ENCODE measurements at regions of chr5 and their contacts with region 1.

Region 1: DNA sequence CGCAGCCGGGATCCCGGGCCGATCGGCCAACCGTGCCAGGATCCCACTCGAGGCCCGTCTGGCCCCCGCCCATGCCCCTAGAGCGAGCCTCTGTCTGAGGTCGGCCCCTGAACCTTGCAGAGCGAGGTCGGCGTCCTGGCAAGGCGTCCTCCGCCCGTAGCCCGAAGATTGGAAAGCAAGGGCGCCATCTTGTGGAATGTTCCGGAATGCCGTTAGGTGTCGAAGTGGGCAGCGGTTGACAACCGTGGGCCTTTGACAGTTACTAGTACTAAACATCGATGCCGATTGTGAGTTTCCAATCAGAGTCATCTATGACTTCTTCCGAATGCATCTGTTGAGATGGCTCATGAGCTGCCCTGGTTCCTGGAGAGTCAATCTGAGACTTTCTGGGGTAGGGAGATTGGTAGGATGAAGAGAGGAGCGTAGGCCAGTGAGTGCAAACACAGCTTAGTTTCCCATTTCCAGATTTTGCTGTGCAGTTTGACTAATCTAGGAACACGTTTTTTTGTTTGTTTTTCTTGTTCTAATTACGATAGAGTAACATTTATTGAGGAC is 923 bp upstream of the PLK2 start:
- DNase-seq: peak; percentile 88 to 95
- ATAC-seq: peak; percentile 84 to 86 (median 85)
- H3K4me3 ChIP-seq: peak overlapping the region; percentile 86
- H3K27ac ChIP-seq: peak overlapping the region; percentile 95
- H3K4me1 ChIP-seq: peaks cover 3% of the 10 kb centered on the region
- H3K27me3 ChIP-seq: no peaks in the 10 kb centered on the region
- CTCF ChIP-seq: peak; percentile 82

Region 2: GRCh38 chr5:57298295-57298984 is 1162.4 kb before region 1 on chr5:
- intact Hi-C with region 1: loop called (anchors 2 kb)
- DNase-seq: peak; percentile 61 to 79
- ATAC-seq: peak; percentile 86 to 97 (median 92)
- H3K4me3 ChIP-seq: no peak overlapping the region
- H3K27ac ChIP-seq: no peak overlapping the region
- H3K4me1 ChIP-seq: no peaks in the 10 kb centered on the region
- H3K27me3 ChIP-seq: no peaks in the 10 kb centered on the region
- CTCF ChIP-seq: peak; percentile 87

Region 3: DNA sequence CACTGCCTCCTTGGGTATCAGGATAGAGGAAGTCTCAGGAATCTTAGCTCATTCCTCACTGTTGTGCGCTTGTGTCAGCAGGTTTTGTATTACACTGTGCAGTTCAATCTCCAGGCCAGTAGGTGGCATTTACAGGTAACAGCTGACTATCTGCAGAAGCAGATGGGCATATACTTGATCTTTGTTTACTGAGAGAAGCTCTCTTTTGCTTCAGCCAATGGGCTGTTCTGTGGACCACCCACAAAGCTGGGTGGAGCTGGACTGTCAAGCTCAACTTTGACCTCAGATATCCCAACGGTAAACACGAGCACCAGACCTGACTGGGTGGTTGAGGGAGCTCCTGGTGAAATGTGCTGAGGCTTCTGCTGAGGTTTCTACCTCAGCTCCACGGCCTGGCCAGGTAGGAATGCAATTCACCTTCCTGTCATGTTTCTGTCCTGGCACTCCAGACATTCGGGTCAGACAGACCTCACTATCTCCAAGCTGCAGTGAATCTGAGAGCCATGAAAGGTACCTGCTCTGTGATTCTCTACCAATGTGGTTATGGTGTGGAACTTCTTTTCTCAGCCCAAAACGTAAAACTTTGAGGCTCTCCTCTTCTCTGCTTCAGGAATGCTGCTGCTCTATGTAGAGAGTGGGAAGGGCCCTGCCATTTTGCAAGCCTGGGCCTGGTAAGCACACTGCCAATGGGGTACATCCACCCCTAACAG is 810.3 kb before region 1 on chr5:
- intact Hi-C with region 1: loop called in 1 of 2 experiments (anchors 5 kb)
- DNase-seq: peak in 1 of 2 donors; percentile 25
- ATAC-seq: peak; percentile 67 to 75 (median 71)
- H3K4me3 ChIP-seq: no peak overlapping the region
- H3K27ac ChIP-seq: no peak overlapping the region
- H3K4me1 ChIP-seq: peaks cover 11% of the 10 kb centered on the region
- H3K27me3 ChIP-seq: no peaks in the 10 kb centered on the region
- CTCF ChIP-seq: peak; percentile 62

Region 4: DNA sequence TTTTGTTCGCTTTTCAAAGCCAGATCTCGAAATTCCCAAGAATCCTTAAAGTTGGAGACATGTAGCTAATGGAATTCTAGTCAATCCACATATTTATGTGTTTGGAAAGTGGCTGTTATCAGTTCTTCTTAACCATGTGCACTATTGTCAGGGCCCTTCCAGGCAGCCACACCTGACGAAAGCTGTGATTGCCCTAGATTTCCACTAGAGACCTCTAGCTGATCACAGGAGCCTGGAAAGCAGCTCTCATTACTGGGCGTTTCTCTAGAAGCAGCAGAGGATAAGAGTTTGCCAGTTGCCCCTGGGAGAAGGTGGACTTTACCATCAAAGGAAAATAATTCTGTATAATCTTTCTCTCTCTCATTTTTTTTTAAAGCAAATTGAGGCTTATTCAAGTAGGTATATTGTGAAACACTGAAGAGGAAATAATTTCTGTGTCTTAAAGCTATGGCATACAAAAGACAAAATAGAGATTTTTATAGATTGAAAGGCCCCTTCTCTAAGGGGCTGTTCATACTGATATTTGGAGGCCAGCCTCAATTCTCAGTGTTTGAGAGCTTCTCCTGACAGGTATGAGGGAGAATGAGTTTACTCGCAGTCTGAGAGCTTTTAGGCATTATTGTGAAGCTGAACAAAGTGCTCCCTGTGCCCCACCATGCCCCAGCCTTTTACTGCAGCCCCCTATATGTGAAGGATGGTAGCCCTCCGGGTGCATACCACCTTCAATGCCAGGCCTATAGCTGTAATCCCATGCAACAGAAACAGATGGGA is 572.8 kb before region 1 on chr5:
- intact Hi-C with region 1: loop called (anchors 1 to 2 kb)
- DNase-seq: no peak
- ATAC-seq: peak; percentile 72 to 93 (median 84)
- H3K4me3 ChIP-seq: no peak overlapping the region
- H3K27ac ChIP-seq: no peak overlapping the region
- H3K4me1 ChIP-seq: no peaks in the 10 kb centered on the region
- H3K27me3 ChIP-seq: no peaks in the 10 kb centered on the region
- CTCF ChIP-seq: peak; percentile 76

Region 5: GRCh38 chr5:58447226-58447625 is 13.6 kb before region 1 on chr5:
- intact Hi-C with region 1: no loop called
- DNase-seq: no peak
- ATAC-seq: no peak
- H3K4me3 ChIP-seq: no peak overlapping the region
- H3K27ac ChIP-seq: no peak overlapping the region
- H3K4me1 ChIP-seq: no peaks in the 10 kb centered on the region
- H3K27me3 ChIP-seq: no peaks in the 10 kb centered on the region
- CTCF ChIP-seq: no peak

Region 6: GRCh38 chr5:58498340-58498942 is 37.6 kb after region 1 on chr5:
- intact Hi-C with region 1: no loop called
- DNase-seq: no peak
- ATAC-seq: no peak
- H3K4me3 ChIP-seq: no peak overlapping the region
- H3K27ac ChIP-seq: no peak overlapping the region
- H3K4me1 ChIP-seq: no peaks in the 10 kb centered on the region
- H3K27me3 ChIP-seq: peaks cover 0 to 6% (median 6%) of the 10 kb centered on the region in 3 donors
- CTCF ChIP-seq: peak; percentile 58

Measured in psoas muscle (tissue), 8 donors.